K562 (cell line): ENCODE measurements at regions of chr4 and their contacts with region 1.

Region 1: GRCh38 chr4:172035562-172035961 is 222.4 kb downstream of the GALNTL6 start:
- DNase-seq: no peak
- ATAC-seq: no peak
- H3K4me3 ChIP-seq: no peak overlapping the region
- H3K27ac ChIP-seq: no peak overlapping the region
- H3K4me1 ChIP-seq: no peaks in the 10 kb centered on the region
- H3K27me3 ChIP-seq: no peaks in the 10 kb centered on the region
- CTCF ChIP-seq: no peak
- EP300 ChIP-seq: no peak
- POLR2A ChIP-seq: no peak
- RAD21 ChIP-seq: no peak

Region 2: GRCh38 chr4:170138580-170139194 is 1896.9 kb before region 1 on chr4:
- CTCF ChIA-PET with region 1: no interaction called
- POLR2A ChIA-PET with region 1: no interaction called
- in situ Hi-C with region 1: no loop called
- intact Hi-C with region 1: loop called (anchors 2 kb)
- DNase-seq: peak; percentile 66 to 78 (median 68)
- ATAC-seq: peak; percentile 96
- H3K4me3 ChIP-seq: no peak overlapping the region
- H3K27ac ChIP-seq: no peak overlapping the region
- H3K4me1 ChIP-seq: no peaks in the 10 kb centered on the region
- H3K27me3 ChIP-seq: no peaks in the 10 kb centered on the region
- CTCF ChIP-seq: peak; percentile 69 to 79 (median 74)
- EP300 ChIP-seq: no peak
- POLR2A ChIP-seq: no peak
- RAD21 ChIP-seq: peak; percentile 39 to 72; a peak in 2 of 4 replicates

Region 3: GRCh38 chr4:172188249-172188938 is 152.8 kb after region 1 on chr4:
- CTCF ChIA-PET with region 1: no interaction called
- POLR2A ChIA-PET with region 1: no interaction called
- in situ Hi-C with region 1: no loop called
- intact Hi-C with region 1: no loop called
- DNase-seq: peak in 1 of 4 experiments; percentile 4
- ATAC-seq: peak; percentile 60
- H3K4me3 ChIP-seq: no peak overlapping the region
- H3K27ac ChIP-seq: no peak overlapping the region
- H3K4me1 ChIP-seq: no peaks in the 10 kb centered on the region; a peak in 1 of 5 replicates
- H3K27me3 ChIP-seq: no peaks in the 10 kb centered on the region
- CTCF ChIP-seq: no peak
- EP300 ChIP-seq: no peak
- POLR2A ChIP-seq: no peak
- RAD21 ChIP-seq: no peak